PC-9 (cell line): ENCODE measurements at regions of chr2 and their contacts with region 1.

Region 1: DNA sequence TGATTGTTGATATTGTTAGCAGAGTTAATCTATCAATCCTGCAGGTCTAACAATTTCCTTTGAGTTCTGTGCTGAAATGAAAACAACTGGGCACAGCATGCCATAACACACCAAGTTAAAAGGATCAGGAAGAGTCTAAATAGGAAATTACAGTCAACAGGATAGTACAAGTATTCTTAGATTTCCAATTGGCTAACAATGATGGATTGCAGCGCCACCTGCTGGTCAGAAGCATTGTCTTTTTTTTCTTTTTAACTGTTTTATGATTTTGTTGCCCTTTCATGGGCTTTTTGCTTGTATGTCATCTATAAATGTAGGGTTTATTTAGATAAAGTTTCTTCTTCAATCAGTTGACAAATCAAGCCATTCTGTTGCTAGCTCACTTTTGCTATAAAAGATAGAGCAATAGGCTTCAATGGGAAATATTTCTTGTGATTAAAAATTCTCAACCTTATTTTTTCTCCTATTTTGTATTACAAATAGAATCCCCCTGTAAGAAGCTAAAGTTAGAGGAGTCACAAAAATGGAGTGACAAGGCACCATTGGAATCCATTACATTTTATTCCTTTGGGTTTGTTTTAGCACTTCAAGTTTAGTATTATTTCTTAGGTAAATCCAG is 40.8 kb upstream of the RPRM start:
- DNase-seq: peak in 1 of 2 experiments; percentile 17
- H3K4me3 ChIP-seq: no peak overlapping the region
- H3K27ac ChIP-seq: no peak overlapping the region
- H3K4me1 ChIP-seq: no peaks in the 10 kb centered on the region
- H3K27me3 ChIP-seq: no peaks in the 10 kb centered on the region
- CTCF ChIP-seq: peak; percentile 81

Region 2: DNA sequence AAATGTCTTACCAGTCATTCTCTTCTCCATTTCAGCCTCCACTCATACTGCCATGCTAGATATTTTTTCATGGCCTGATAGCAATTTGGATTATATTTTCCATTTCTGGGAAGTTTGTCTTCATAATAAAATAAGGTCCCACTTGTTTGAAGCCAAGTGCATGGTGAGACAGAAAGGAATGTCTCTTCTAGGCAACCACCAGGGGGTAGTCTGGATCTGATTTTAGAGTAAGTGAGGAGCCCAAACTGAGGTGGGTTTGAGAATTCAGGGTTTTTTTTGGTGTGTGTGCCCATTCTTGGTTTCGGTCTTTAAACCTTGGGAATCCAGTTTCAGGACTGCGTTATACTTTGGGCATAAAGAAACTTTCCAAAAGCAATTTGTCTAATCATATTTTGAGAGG is 356.3 kb before region 1 on chr2:
- CTCF ChIA-PET with region 1: no interaction called
- POLR2A ChIA-PET with region 1: no interaction called
- intact Hi-C with region 1: loop called (anchors 5 kb)
- DNase-seq: no peak
- H3K4me3 ChIP-seq: no peak overlapping the region
- H3K27ac ChIP-seq: no peak overlapping the region
- H3K4me1 ChIP-seq: no peaks in the 10 kb centered on the region
- H3K27me3 ChIP-seq: no peaks in the 10 kb centered on the region
- CTCF ChIP-seq: peak; percentile 71